PC-3 (cell line): ENCODE measurements at regions of chr3 and their contacts with region 1.

Region 1: GRCh38 chr3:142129516-142130171 is 19.7 kb downstream of the TFDP2 start:
- DNase-seq: no peak
- ATAC-seq: no peak
- H3K4me3 ChIP-seq: no peak overlapping the region
- H3K27ac ChIP-seq: no peak overlapping the region
- H3K4me1 ChIP-seq: no peaks in the 10 kb centered on the region
- H3K27me3 ChIP-seq: no peaks in the 10 kb centered on the region
- CTCF ChIP-seq: peak; percentile 27; the same call in 1 of the 2 replicates

Region 2: GRCh38 chr3:141959921-141960554 is 169.6 kb before region 1 on chr3:
- CTCF ChIA-PET with region 1: no interaction called
- POLR2A ChIA-PET with region 1: no interaction called
- intact Hi-C with region 1: loop called (anchors 5 kb)
- DNase-seq: peak; percentile 68
- ATAC-seq: peak; percentile 79
- H3K4me3 ChIP-seq: no peak overlapping the region
- H3K27ac ChIP-seq: peak overlapping the region; percentile 0; the same call in 1 of the 2 replicates
- H3K4me1 ChIP-seq: peaks cover 18% of the 10 kb centered on the region
- H3K27me3 ChIP-seq: no peaks in the 10 kb centered on the region
- CTCF ChIP-seq: no peak

Region 3: DNA sequence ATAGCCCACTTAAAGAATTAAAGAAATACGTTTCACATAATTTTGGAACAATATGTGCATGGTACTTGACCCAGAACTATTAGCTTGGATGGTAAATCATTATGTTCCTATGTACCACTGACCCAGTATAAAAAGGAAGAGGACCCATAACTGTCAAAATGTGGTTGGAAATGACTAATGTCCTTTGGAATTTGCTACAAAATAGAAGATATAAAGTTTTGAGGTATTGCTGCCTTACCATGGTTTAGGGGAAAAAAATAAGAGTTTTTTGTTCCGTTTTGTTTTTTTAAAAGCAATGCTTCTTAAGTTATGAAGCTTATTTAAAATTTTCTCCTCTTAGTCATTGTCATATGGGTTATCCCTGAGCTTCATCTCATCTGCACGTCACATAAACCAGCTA is 35.5 kb after region 1 on chr3:
- CTCF ChIA-PET with region 1: no interaction called
- POLR2A ChIA-PET with region 1: no interaction called
- intact Hi-C with region 1: loop called (anchors 5 kb)
- DNase-seq: peak; percentile 44
- ATAC-seq: peak; percentile 80
- H3K4me3 ChIP-seq: no peak overlapping the region
- H3K27ac ChIP-seq: no peak overlapping the region
- H3K4me1 ChIP-seq: peaks cover 14% of the 10 kb centered on the region
- H3K27me3 ChIP-seq: no peaks in the 10 kb centered on the region
- CTCF ChIP-seq: no peak

Region 4: GRCh38 chr3:142211035-142211434 is 81.4 kb after region 1 on chr3:
- CTCF ChIA-PET with region 1: no interaction called
- POLR2A ChIA-PET with region 1: no interaction called
- intact Hi-C with region 1: loop called (anchors 5 kb)
- DNase-seq: no peak
- ATAC-seq: peak; percentile 35; the same call in 1 of the 2 replicates
- H3K4me3 ChIP-seq: no peak overlapping the region
- H3K27ac ChIP-seq: no peak overlapping the region
- H3K4me1 ChIP-seq: no peaks in the 10 kb centered on the region
- H3K27me3 ChIP-seq: no peaks in the 10 kb centered on the region
- CTCF ChIP-seq: peak; percentile 34; the same call in 1 of the 2 replicates

Region 5: DNA sequence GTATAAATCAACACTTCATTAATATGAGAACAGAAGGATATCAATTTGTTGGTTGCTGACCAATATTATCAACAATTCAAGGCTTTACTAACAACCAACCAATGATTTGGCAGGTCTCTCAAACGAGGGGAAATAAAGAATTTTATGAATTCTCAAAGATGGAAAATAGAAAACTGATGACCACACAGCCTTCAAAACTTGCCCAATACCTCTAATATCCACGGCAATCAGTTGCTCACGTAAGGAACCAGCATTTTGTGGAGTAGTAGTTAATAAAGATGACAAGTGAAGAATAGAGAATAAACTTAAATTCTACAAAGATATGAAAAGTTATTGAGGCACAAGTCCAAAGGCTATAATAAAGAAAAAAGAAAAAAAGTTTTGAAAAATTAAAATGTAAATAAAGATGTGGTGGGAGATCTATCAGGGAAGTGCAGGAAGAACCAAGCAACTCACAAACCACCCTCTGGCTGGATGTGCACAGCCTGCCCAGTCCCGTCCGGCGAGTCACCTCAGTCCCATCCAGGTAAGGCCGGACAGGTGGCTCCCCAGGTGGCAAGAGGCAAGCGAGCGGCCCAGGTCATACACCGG is 94.9 kb after region 1 on chr3:
- CTCF ChIA-PET with region 1: no interaction called
- POLR2A ChIA-PET with region 1: no interaction called
- intact Hi-C with region 1: loop called (anchors 5 kb)
- DNase-seq: no peak
- ATAC-seq: no peak
- H3K4me3 ChIP-seq: peak overlapping the region; percentile 90
- H3K27ac ChIP-seq: peak overlapping the region; percentile 58; the same call in 1 of the 2 replicates
- H3K4me1 ChIP-seq: peaks cover 6% of the 10 kb centered on the region; the same call in 1 of the 2 replicates
- H3K27me3 ChIP-seq: no peaks in the 10 kb centered on the region
- CTCF ChIP-seq: no peak

Region 6: GRCh38 chr3:142735462-142735861 is 605.8 kb after region 1 on chr3:
- CTCF ChIA-PET with region 1: no interaction called
- POLR2A ChIA-PET with region 1: no interaction called
- intact Hi-C with region 1: no loop called
- DNase-seq: no peak
- ATAC-seq: no peak
- H3K4me3 ChIP-seq: no peak overlapping the region
- H3K27ac ChIP-seq: no peak overlapping the region
- H3K4me1 ChIP-seq: no peaks in the 10 kb centered on the region
- H3K27me3 ChIP-seq: no peaks in the 10 kb centered on the region
- CTCF ChIP-seq: no peak